Posterior vena cava (tissue), 2 donors: ENCODE measurements at regions of chr6 and their contacts with region 1.

Region 1: DNA sequence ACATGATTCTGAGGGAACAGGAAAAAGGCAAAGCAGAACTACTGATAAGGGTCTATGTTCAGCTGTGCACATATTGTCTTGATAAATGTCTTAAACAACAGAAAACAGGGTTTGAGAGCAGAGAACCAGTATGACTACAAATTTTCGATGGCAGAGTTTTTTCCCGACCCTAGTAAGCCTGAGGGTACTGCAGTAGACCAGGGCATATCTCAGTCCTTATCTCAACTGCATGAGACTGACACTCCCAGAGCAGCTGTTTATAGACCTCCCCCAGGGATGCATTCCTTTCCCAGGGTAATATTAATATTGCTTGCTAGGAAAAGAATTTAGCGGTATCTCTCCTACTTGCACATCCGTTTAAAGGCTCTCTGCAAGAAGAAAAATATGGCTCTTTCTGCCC is 1176.8 kb upstream of the ADGRB3 start:
- DNase-seq: no peak

Region 2: DNA sequence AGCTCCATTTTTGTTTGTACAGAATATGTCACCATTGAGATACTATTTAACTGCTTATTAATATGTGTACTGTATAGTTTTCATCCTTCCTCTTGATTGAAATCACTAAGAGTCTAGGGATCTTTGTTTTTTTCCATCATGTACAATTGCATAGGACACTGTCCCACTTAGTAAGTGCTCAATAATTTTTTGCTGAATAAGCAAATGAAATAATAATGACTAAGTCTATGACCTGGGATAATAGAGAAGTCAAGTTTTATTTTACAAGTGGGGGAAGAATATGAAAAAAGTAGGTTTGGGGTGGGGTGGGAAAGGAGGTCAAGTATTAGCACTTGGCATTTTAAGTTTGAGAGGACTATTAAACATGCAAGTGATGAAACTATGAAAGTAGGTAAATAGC is 1746.7 kb before region 1 on chr6:
- intact Hi-C with region 1: loop called in 1 of 2 experiments (anchors 5 kb)
- DNase-seq: no peak

Region 3: DNA sequence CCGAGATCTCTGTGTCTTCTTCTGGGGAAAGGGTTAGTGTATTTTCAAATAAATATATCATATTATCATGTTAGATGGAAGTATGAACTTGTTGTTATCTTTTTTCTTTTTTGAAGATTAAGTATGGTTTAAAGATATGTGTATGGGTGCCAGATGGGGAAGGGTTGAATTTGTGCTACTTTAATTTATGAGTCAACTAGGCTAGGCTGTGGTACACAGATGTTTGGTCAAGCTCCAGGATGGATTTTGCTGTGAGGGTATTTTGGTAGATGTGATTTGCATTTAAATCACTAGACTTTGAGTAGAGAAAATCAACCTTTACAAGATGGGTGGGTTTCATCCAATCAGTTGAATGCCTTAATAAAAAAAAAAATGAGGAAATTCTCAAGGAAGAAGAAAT is 290.3 kb after region 1 on chr6:
- intact Hi-C with region 1: no loop called
- DNase-seq: no peak